ENCODE measurements at regions of chr9 and their contacts with region 1.

Region 1: GRCh38 chr9:105663914-105664313 is 1.7 kb downstream of the TAL2 start:
- DNase-seq: no peak
- ATAC-seq: no peak
- H3K4me3 ChIP-seq: no peak overlapping the region
- H3K4me3 Mint-ChIP-seq: no peak overlapping the region
- H3K27ac ChIP-seq: no peak overlapping the region
- H3K27ac Mint-ChIP-seq: no peak overlapping the region
- H3K4me1 ChIP-seq: no peaks in the 10 kb centered on the region
- H3K4me1 Mint-ChIP-seq: no peaks in the 10 kb centered on the region
- H3K27me3 ChIP-seq: peaks cover 0 to 7% of the 10 kb centered on the region in 2 experiments
- H3K27me3 Mint-ChIP-seq: peaks cover 4 to 11% of the 10 kb centered on the region in 2 donors

Region 2: GRCh38 chr9:104725014-104725413 is 938.9 kb before region 1 on chr9:
- CTCF ChIA-PET with region 1: no interaction called
- POLR2A ChIA-PET with region 1: no interaction called
- DNase-seq: no peak
- ATAC-seq: no peak
- H3K4me3 ChIP-seq: no peak overlapping the region
- H3K4me3 Mint-ChIP-seq: no peak overlapping the region
- H3K27ac ChIP-seq: no peak overlapping the region
- H3K27ac Mint-ChIP-seq: no peak overlapping the region
- H3K4me1 ChIP-seq: no peaks in the 10 kb centered on the region
- H3K4me1 Mint-ChIP-seq: peaks cover 0 to 6% (median 0%) of the 10 kb centered on the region in 3 donors
- H3K27me3 ChIP-seq: peaks cover 0 to 6% of the 10 kb centered on the region in 2 experiments
- H3K27me3 Mint-ChIP-seq: peaks cover 0 to 4% of the 10 kb centered on the region in 2 donors

Region 3: GRCh38 chr9:105572455-105572854 is 91.5 kb before region 1 on chr9:
- CTCF ChIA-PET with region 1: no interaction called
- POLR2A ChIA-PET with region 1: no interaction called
- DNase-seq: no peak
- ATAC-seq: no peak
- H3K4me3 ChIP-seq: no peak overlapping the region
- H3K4me3 Mint-ChIP-seq: no peak overlapping the region
- H3K27ac ChIP-seq: no peak overlapping the region
- H3K27ac Mint-ChIP-seq: no peak overlapping the region
- H3K4me1 ChIP-seq: no peaks in the 10 kb centered on the region
- H3K4me1 Mint-ChIP-seq: no peaks in the 10 kb centered on the region
- H3K27me3 ChIP-seq: no peaks in the 10 kb centered on the region
- H3K27me3 Mint-ChIP-seq: no peaks in the 10 kb centered on the region

Region 4: GRCh38 chr9:105681724-105682123 is 17.8 kb after region 1 on chr9:
- CTCF ChIA-PET with region 1: no interaction called
- POLR2A ChIA-PET with region 1: interaction called in 1 of 2 experiments, 10 read pairs
- DNase-seq: no peak
- ATAC-seq: no peak
- H3K4me3 ChIP-seq: no peak overlapping the region
- H3K4me3 Mint-ChIP-seq: no peak overlapping the region
- H3K27ac ChIP-seq: no peak overlapping the region
- H3K27ac Mint-ChIP-seq: no peak overlapping the region
- H3K4me1 ChIP-seq: no peaks in the 10 kb centered on the region
- H3K4me1 Mint-ChIP-seq: no peaks in the 10 kb centered on the region
- H3K27me3 ChIP-seq: no peaks in the 10 kb centered on the region
- H3K27me3 Mint-ChIP-seq: no peaks in the 10 kb centered on the region

Region 5: GRCh38 chr9:105818903-105819302 is 155.0 kb after region 1 on chr9:
- CTCF ChIA-PET with region 1: no interaction called
- POLR2A ChIA-PET with region 1: no interaction called
- DNase-seq: no peak
- ATAC-seq: no peak
- H3K4me3 ChIP-seq: no peak overlapping the region
- H3K4me3 Mint-ChIP-seq: no peak overlapping the region
- H3K27ac ChIP-seq: no peak overlapping the region
- H3K27ac Mint-ChIP-seq: no peak overlapping the region
- H3K4me1 ChIP-seq: no peaks in the 10 kb centered on the region
- H3K4me1 Mint-ChIP-seq: no peaks in the 10 kb centered on the region
- H3K27me3 ChIP-seq: no peaks in the 10 kb centered on the region
- H3K27me3 Mint-ChIP-seq: no peaks in the 10 kb centered on the region

Measured in T-cell (primary cell).